ENCODE measurements at regions of chr10 and their contacts with region 1.

Region 1: GRCh38 chr10:71212318-71213126 is at the start of gene UNC5B:
- DNase-seq: peak; percentile 82 to 91
- H3K4me3 ChIP-seq: peak within 1 kb of the TSS; percentile 53 to 90 (median 72)
- H3K27ac ChIP-seq: peak within 1 kb of the TSS; percentile 83 to 85
- H3K4me1 ChIP-seq: peaks cover 0 to 6% of the 10 kb centered on the region in 2 donors
- H3K27me3 ChIP-seq: peaks cover 3 to 15% of the 10 kb centered on the region in 2 donors
- CTCF ChIP-seq: peak in 1 of 3 donors; percentile 36
- POLR2A ChIP-seq: no peak
- total RNA-seq, gene UNC5B: 0.80 to 4.9 (median 3.5) TPM

Region 2: GRCh38 chr10:70007116-70007820 is 1205.3 kb before region 1 on chr10:
- intact Hi-C with region 1: no loop called
- DNase-seq: no peak
- H3K4me3 ChIP-seq: no peak overlapping the region
- H3K27ac ChIP-seq: no peak overlapping the region
- H3K4me1 ChIP-seq: no peaks in the 10 kb centered on the region
- H3K27me3 ChIP-seq: no peaks in the 10 kb centered on the region
- CTCF ChIP-seq: no peak
- POLR2A ChIP-seq: no peak

Region 3: GRCh38 chr10:70391654-70392053 is 820.9 kb before region 1 on chr10:
- intact Hi-C with region 1: no loop called
- DNase-seq: no peak
- H3K4me3 ChIP-seq: no peak overlapping the region
- H3K27ac ChIP-seq: no peak overlapping the region
- H3K4me1 ChIP-seq: no peaks in the 10 kb centered on the region
- H3K27me3 ChIP-seq: no peaks in the 10 kb centered on the region
- CTCF ChIP-seq: no peak
- POLR2A ChIP-seq: no peak

Region 4: GRCh38 chr10:71230656-71231025 is 18.1 kb after region 1 on chr10:
- intact Hi-C with region 1: loop called (anchors 1 kb)
- DNase-seq: no peak
- H3K4me3 ChIP-seq: no peak overlapping the region
- H3K27ac ChIP-seq: no peak overlapping the region
- H3K4me1 ChIP-seq: no peaks in the 10 kb centered on the region
- H3K27me3 ChIP-seq: no peaks in the 10 kb centered on the region
- CTCF ChIP-seq: no peak
- POLR2A ChIP-seq: no peak

Region 5: DNA sequence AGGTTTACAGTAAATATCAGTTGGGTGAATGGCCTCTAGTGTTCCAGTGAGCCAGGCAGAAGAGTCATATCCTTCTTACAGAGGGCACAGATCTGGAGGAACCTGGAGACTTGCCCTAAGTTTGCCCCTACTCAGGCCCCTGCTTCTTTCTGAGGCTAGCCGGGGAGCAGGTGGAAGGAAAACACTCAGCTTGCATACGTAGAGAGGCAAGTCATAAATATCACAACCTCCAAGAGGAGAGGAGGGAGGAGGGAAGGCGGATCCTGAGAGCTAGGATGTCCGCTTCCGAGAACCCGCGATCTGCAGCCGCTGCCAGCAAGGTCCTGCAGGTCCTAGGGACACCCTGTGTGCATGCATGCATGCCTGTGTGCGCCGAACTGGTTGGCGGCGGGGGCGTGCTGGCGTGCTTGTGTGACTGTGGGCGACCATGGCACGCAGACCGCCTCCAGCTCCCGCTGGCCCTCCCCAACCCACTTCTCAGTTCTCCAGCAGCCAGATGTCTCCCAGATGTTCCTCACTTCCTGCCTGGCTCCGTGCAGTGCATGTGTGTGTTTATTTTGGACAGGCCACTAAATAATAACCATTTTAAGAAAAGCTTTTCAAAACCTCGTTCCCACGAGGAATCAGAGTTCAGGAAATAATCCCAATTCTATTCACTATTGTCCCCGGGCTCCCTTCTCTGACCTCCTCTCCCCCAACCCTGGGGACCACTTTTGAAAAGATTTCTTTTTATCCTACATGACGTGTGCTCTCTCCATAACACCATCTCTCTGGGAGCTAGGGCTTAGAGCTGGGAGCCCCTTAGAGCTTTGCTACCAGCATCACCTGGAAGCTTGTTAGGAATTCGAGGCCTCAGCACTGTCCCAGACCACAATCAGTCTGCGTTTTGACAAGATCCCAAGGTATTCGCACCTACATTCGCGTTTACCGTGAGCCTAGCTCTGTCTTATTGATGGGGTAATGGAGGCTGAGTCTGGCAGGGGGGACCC is 32.2 kb after region 1 on chr10:
- intact Hi-C with region 1: no loop called
- DNase-seq: no peak
- H3K4me3 ChIP-seq: peak overlapping the region; percentile 5 to 62 (median 32)
- H3K27ac ChIP-seq: peak overlapping the region; percentile 71 to 85
- H3K4me1 ChIP-seq: peaks cover 18 to 36% of the 10 kb centered on the region in 2 donors
- H3K27me3 ChIP-seq: no peaks in the 10 kb centered on the region
- CTCF ChIP-seq: no peak
- POLR2A ChIP-seq: no peak

Measured in breast epithelium (tissue), 4 donors.